ENCODE measurements at regions of chrX and their contacts with region 1.

Region 1: DNA sequence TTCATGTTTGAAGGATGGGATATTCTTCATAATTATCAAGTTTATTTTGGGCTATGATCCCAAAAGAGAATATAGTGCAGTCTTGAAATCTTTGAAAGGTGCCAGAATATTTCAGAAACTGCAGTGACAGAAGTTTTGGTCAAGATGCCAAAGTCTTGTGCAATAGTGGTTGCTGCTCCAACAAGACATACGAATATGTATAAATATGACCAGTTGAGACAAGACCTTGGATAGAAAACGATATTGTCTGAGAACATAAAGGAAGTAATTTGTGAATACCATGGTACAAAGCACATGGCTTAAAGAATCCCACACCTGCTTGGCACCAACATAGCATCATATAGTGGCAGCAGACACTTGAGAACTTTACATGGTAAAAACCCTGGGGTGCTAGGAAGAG is 48.6 kb upstream of the AMELX start:
- DNase-seq: no peak
- H3K4me3 ChIP-seq: no peak overlapping the region
- H3K27ac ChIP-seq: no peak overlapping the region
- H3K4me1 ChIP-seq: no peaks in the 10 kb centered on the region
- H3K27me3 ChIP-seq: no peaks in the 10 kb centered on the region
- CTCF ChIP-seq: no peak
- EP300 ChIP-seq: no peak
- POLR2A ChIP-seq: no peak

Region 2: DNA sequence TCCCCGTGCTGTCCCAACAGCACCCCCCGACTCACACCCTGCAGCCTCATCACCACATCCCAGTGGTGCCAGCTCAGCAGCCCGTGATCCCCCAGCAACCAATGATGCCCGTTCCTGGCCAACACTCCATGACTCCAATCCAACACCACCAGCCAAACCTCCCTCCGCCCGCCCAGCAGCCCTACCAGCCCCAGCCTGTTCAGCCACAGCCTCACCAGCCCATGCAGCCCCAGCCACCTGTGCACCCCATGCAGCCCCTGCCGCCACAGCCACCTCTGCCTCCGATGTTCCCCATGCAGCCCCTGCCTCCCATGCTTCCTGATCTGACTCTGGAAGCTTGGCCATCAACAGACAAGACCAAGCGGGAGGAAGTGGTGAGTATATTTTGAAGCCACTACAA is 54.0 kb after region 1 on chrX:
- in situ Hi-C with region 1: no loop called
- intact Hi-C with region 1: loop called (anchors 2 kb)
- DNase-seq: no peak
- H3K4me3 ChIP-seq: no peak overlapping the region
- H3K27ac ChIP-seq: no peak overlapping the region
- H3K4me1 ChIP-seq: peaks cover 0 to 5% (median 0%) of the 10 kb centered on the region in 4 donors
- H3K27me3 ChIP-seq: no peaks in the 10 kb centered on the region
- CTCF ChIP-seq: no peak
- EP300 ChIP-seq: no peak
- POLR2A ChIP-seq: no peak